Body of pancreas (tissue), 4 donors: ENCODE measurements at regions of chr12 and their contacts with region 1.

Region 1: DNA sequence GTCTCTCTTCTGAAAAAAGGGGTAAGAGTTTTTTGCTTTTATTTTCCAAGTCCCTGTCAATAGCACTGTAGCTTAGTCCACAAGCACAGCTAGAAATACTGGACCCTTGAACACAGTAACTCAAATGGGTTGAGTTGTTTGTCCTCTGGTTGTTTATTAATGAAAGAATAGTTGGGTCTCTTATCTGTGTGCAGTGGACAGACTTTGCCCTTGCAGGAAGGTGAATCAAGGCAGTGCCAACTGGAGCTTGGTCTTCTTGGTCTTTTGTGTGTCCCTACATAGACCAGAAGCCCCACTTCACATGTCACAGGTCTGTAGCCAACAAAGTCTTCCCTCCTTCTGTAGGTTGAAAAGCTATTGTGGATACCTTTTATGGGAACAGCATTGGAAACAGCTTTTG is 322.0 kb downstream of the AACS start:
- DNase-seq: no peak
- ATAC-seq: no peak
- H3K4me3 ChIP-seq: no peak overlapping the region
- H3K27ac ChIP-seq: no peak overlapping the region
- H3K4me1 ChIP-seq: peaks cover 7% of the 10 kb centered on the region
- H3K27me3 ChIP-seq: no peaks in the 10 kb centered on the region
- CTCF ChIP-seq: no peak
- POLR2A ChIP-seq: no peak

Region 2: GRCh38 chr12:125193798-125194773 is 193.1 kb before region 1 on chr12:
- intact Hi-C with region 1: loop called (anchors 5 kb)
- DNase-seq: no peak
- ATAC-seq: no peak
- H3K4me3 ChIP-seq: no peak overlapping the region
- H3K27ac ChIP-seq: no peak overlapping the region
- H3K4me1 ChIP-seq: no peaks in the 10 kb centered on the region
- H3K27me3 ChIP-seq: peaks cover 0 to 20% of the 10 kb centered on the region in 2 donors
- CTCF ChIP-seq: peak in 1 of 7 experiments; percentile 3
- POLR2A ChIP-seq: no peak

Region 3: DNA sequence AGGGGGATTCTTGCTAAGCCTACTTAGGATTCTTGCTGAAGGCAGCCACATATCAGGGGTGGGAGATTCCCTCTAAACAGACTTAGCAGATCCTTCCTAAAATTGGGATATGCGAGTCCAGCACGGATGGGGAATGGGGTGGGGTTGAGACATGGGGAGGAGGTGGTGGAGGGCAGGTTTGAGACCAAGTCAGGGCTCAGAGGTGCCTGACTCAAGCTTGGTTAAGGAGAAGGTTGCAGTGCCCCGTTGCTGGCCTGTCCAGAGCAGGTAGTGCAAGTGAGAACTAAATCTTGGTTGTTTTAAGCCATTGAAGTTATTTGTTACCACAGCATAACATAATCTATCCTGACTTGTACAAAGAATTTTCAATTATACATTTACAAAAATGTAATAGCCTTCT is 37.7 kb after region 1 on chr12:
- intact Hi-C with region 1: no loop called
- DNase-seq: no peak
- ATAC-seq: no peak
- H3K4me3 ChIP-seq: no peak overlapping the region
- H3K27ac ChIP-seq: no peak overlapping the region
- H3K4me1 ChIP-seq: no peaks in the 10 kb centered on the region
- H3K27me3 ChIP-seq: no peaks in the 10 kb centered on the region
- CTCF ChIP-seq: no peak
- POLR2A ChIP-seq: no peak

Region 4: DNA sequence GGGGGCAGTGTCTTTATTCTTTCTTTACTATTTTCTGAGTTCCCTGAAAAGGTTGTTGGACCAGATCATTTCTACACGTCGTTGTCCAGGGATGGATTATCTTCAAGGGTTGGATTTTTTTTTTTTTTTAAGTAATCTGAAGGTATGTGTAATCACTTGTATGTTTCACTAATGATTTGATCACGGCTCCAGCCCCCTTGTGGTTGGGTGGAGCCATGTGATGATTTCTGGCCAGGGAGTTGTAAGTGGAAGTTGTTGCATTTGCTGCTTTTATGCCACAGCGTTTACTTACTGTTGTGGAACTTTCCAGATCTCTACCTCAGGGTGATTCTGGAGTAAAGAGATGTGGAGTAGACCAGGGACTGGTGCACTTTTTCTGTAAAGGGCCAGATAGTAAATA is 68.3 kb after region 1 on chr12:
- intact Hi-C with region 1: no loop called
- DNase-seq: no peak
- ATAC-seq: no peak
- H3K4me3 ChIP-seq: no peak overlapping the region
- H3K27ac ChIP-seq: no peak overlapping the region
- H3K4me1 ChIP-seq: no peaks in the 10 kb centered on the region
- H3K27me3 ChIP-seq: no peaks in the 10 kb centered on the region
- CTCF ChIP-seq: no peak
- POLR2A ChIP-seq: no peak